Activated naive CD4-positive, alpha-beta T cell treated with anti-CD3 and anti-CD28 coated beads for 36 hours (primary cell): ENCODE measurements at regions of chr12 and their contacts with region 1.

Region 1: GRCh38 chr12:123457980-123458783 is at the start of gene SNRNP35:
- DNase-seq: peak; percentile 83
- H3K4me3 Mint-ChIP-seq: peak within 1 kb of the TSS; percentile 97
- H3K27ac Mint-ChIP-seq: peak within 1 kb of the TSS; percentile 100
- H3K4me1 Mint-ChIP-seq: peaks cover 25% of the 10 kb centered on the region
- H3K27me3 Mint-ChIP-seq: no peaks in the 10 kb centered on the region
- total RNA-seq, gene SNRNP35: 21.5 to 21.8 TPM

Region 2: DNA sequence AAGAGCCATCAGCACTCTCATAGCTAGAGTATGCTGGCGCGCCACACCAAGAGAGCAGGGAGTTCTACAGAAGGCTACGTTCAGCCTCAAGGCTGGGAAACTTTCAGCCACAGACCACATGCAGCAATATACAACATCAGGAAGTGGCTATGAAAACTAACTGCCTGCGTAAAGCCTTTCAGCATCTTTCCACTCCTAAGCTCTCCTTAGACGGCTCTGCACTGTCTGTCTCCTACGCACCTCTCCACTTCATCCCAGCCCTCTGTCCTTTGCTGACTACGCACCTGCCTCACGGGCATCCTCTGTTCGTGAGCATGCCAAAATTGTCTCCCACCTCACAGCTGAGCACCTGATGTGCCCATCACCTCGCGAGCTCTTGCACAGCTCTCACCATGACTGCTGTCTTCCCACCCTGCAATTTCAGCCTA is 234.9 kb before region 1 on chr12:
- CTCF ChIA-PET with region 1: no interaction called
- intact Hi-C with region 1: no loop called
- DNase-seq: peak; percentile 73
- H3K4me3 Mint-ChIP-seq: peak overlapping the region; percentile 8
- H3K27ac Mint-ChIP-seq: peak overlapping the region; percentile 28
- H3K4me1 Mint-ChIP-seq: peaks cover 35% of the 10 kb centered on the region
- H3K27me3 Mint-ChIP-seq: no peaks in the 10 kb centered on the region

Region 3: GRCh38 chr12:123445388-123446351 is 12.5 kb before region 1 on chr12:
- CTCF ChIA-PET with region 1: interaction called, 3 read pairs
- intact Hi-C with region 1: loop called (anchors 1 kb)
- DNase-seq: no peak
- H3K4me3 Mint-ChIP-seq: no peak overlapping the region
- H3K27ac Mint-ChIP-seq: peak overlapping the region; percentile 21
- H3K4me1 Mint-ChIP-seq: peaks cover 35% of the 10 kb centered on the region
- H3K27me3 Mint-ChIP-seq: no peaks in the 10 kb centered on the region

Region 4: DNA sequence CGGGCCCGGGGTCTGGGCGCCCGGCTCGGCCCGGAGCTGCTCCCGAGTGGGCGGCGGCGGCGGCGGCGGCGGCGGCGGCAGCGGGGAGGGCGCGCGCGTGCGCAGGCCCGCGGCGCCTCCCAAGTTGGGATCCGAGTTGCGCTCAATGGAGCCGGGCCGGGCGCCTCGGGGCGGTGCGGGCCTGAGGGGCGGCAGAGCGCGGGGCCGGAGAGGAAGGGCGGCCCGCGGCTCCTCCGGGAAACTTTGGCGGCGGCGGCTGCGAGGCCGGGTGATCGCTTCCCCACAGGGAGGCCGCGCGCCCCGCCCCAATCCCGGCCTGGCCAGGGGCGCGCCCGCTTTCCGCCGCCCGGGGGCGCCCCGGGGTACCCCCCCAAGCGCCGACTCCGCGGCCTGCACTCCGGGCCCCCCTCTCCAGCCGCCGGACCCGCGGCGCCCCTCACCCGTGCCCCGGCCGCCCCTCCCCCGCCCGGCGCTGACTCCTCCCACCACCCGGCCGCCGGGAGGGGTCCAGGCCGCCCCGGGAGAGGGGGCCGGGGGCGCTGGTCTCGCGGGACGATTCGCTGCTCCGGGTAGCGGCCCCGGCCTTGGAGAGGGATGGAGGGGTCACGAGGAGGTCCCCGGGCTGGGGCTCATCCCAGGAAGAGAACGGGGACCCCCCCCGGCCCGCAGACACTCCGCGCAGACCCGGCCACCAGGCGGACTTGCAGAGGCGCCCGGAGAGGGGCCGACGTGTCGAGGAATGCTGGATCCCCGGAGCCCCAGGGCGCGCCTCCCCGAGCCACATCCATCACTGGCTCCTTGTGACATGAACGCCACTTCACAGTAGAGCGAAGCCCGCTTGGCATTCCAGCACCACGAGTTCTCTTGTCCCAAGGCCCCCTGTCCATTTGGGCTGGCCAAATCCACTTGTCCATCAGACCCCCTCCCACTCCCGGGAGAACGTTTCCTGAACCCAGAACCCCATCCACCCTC is 75.8 kb after region 1 on chr12 and contains the start of gene RILPL1:
- CTCF ChIA-PET with region 1: no interaction called
- intact Hi-C with region 1: loop called (anchors 2 kb)
- DNase-seq: peak; percentile 30
- H3K4me3 Mint-ChIP-seq: peak within 1 kb of the TSS; percentile 79
- H3K27ac Mint-ChIP-seq: no peak within 1 kb of the TSS
- H3K4me1 Mint-ChIP-seq: peaks cover 16% of the 10 kb centered on the region
- H3K27me3 Mint-ChIP-seq: no peaks in the 10 kb centered on the region
- total RNA-seq, gene RILPL1: 2.2 to 3.2 TPM

Region 5: DNA sequence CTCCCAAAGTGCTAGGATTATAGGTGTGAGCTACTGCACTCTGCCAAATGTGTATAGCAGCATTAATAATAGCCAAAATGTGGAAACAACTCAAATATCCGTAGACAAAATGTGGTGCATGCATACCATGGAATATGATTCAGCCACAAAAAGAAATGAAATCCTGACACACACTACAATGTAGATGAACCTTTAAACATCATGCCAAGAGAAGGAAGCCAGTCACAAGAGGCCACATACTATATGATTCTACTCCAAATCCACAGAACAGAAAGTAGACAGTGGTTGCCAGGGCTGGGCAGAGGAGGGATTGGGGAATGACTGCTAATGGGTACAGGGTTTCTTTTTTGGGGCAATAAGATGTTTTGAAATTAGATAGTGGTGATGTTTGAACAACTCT is 118.4 kb after region 1 on chr12:
- CTCF ChIA-PET with region 1: no interaction called
- intact Hi-C with region 1: no loop called
- DNase-seq: no peak
- H3K4me3 Mint-ChIP-seq: no peak overlapping the region
- H3K27ac Mint-ChIP-seq: no peak overlapping the region
- H3K4me1 Mint-ChIP-seq: peaks cover 3% of the 10 kb centered on the region
- H3K27me3 Mint-ChIP-seq: no peaks in the 10 kb centered on the region